Endothelial cell of umbilical vein (primary cell): ENCODE measurements at regions of chr11 and their contacts with region 1.

Region 1: DNA sequence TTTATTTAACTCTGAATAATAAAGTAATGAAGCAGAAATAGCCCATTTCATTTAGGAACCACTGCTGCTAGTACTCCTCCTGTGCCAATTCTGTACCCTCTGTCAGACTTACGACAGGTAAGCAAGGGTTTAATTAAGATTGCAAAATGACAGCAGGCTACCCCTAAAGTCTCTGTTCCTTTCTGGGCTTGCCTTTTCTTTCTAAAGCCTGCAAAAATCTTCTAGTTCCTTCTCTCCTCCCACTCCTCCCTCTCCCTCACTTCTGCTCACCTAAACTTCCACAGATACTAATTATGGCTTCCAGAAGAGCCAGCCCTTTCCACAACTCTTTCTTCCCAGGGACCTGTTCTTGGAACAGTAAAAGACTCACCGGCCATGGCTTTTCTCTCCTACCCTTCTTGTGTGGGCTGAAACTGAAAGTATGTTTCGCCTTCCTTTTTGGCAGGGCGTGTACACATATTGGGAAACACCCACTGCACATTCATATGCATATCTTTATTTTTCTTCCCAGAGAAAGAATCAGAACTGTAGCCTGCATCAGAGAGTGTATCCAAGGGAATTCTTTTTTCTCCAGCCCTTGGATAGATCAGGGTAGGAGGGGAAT is at the start of gene CARD16:
- DNase-seq: peak; percentile 74
- H3K4me3 ChIP-seq: peak within 1 kb of the TSS; percentile 36 to 83 (median 62)
- H3K27ac ChIP-seq: peak within 1 kb of the TSS; percentile 88
- H3K4me1 ChIP-seq: peaks cover 41% of the 10 kb centered on the region
- H3K27me3 ChIP-seq: no peaks in the 10 kb centered on the region
- CTCF ChIP-seq: no peak
- POLR2A ChIP-seq: no peak
- total RNA-seq, gene CARD16: 68.7 and 76.6 TPM in 2 replicates

Region 2: DNA sequence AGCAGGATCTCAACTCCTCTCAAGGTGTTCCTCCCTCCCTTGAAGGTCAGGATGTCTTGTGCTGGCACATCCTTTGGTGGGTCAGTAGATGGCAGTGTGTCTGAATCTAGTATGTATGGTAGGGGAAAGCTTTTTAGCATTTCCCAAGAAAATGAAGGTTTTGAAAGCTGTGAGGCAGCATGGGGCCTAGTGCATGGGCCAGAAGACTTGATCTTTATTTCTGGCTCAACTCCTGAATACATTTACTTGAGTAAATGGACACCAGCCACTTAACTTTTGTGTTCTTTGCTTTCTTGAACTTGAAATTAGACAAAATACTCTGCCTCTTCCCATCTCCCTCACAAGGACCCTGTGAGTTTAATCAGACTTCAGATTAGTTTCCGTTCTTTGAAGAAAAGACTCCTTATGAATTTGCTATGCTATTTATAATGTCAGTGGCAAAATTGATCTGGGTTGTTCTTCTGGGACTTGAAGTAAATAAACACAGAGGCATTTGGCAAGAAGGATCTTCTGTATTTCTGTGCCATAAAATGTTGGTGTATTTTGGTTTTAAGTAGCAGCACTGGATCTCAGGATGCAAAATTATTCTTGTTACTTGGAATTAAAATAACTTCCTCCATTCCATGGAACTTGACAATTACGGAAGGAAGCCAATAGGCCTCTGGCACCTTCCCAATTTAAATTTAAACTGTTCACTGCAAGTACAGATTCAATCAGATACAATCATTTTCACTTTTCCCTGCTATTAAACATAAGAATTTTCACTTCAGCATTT is 435.5 kb before region 1 on chr11:
- CTCF ChIA-PET with region 1: no interaction called
- POLR2A ChIA-PET with region 1: no interaction called
- dilution Hi-C with region 1: no loop called
- intact Hi-C with region 1: loop called (anchors 1 kb)
- DNase-seq: peak; percentile 80
- H3K4me3 ChIP-seq: no peak overlapping the region
- H3K27ac ChIP-seq: no peak overlapping the region
- H3K4me1 ChIP-seq: peaks cover 8% of the 10 kb centered on the region
- H3K27me3 ChIP-seq: no peaks in the 10 kb centered on the region
- CTCF ChIP-seq: peak; percentile 69 to 74
- POLR2A ChIP-seq: no peak

Region 3: DNA sequence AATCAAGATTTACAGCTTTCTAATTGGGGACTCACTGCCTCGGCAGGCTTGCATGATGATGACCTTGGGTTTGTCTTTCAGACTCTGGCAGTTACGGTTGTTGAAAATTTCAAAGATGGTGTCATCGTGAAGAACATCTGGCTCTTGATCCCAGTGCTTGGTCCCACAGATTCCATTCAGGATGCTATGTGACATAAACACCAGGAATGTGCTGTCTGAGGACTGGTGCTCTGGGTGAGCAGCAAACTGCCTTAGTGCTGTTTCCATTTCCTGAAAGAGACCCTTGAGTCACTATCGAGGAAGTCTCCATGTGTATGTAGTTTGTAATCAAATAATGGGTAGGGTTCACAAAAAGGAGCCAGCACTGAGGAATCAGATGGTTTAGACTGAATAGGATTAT is 153.9 kb before region 1 on chr11:
- CTCF ChIA-PET with region 1: no interaction called
- POLR2A ChIA-PET with region 1: no interaction called
- dilution Hi-C with region 1: no loop called
- intact Hi-C with region 1: no loop called
- DNase-seq: peak; percentile 74
- H3K4me3 ChIP-seq: no peak overlapping the region
- H3K27ac ChIP-seq: peak overlapping the region; percentile 39
- H3K4me1 ChIP-seq: peaks cover 40% of the 10 kb centered on the region
- H3K27me3 ChIP-seq: no peaks in the 10 kb centered on the region
- CTCF ChIP-seq: no peak
- POLR2A ChIP-seq: no peak

Region 4: GRCh38 chr11:104934594-104934993 is 110.4 kb before region 1 on chr11:
- CTCF ChIA-PET with region 1: no interaction called
- POLR2A ChIA-PET with region 1: no interaction called
- dilution Hi-C with region 1: no loop called
- intact Hi-C with region 1: no loop called
- DNase-seq: no peak
- H3K4me3 ChIP-seq: no peak overlapping the region
- H3K27ac ChIP-seq: no peak overlapping the region
- H3K4me1 ChIP-seq: no peaks in the 10 kb centered on the region
- H3K27me3 ChIP-seq: no peaks in the 10 kb centered on the region
- CTCF ChIP-seq: no peak
- POLR2A ChIP-seq: no peak

Region 5: GRCh38 chr11:104968355-104968855 is 76.6 kb before region 1 on chr11 and contains the start of gene CASP4:
- CTCF ChIA-PET with region 1: interaction called, 3 read pairs
- POLR2A ChIA-PET with region 1: no interaction called
- dilution Hi-C with region 1: no loop called
- intact Hi-C with region 1: loop called (anchors 1 kb)
- DNase-seq: peak; percentile 93
- H3K4me3 ChIP-seq: peak within 1 kb of the TSS; percentile 48 to 93 (median 91)
- H3K27ac ChIP-seq: peak within 1 kb of the TSS; percentile 92
- H3K4me1 ChIP-seq: peaks cover 20% of the 10 kb centered on the region
- H3K27me3 ChIP-seq: no peaks in the 10 kb centered on the region
- CTCF ChIP-seq: no peak
- POLR2A ChIP-seq: peak; percentile 56
- total RNA-seq, gene CASP4: 77.4 and 83.1 TPM in 2 replicates

Region 6: GRCh38 chr11:105109855-105110687 is 65.0 kb after region 1 on chr11:
- CTCF ChIA-PET with region 1: no interaction called
- POLR2A ChIA-PET with region 1: no interaction called
- dilution Hi-C with region 1: no loop called
- intact Hi-C with region 1: loop called (anchors 1 kb)
- DNase-seq: peak; percentile 72
- H3K4me3 ChIP-seq: peak overlapping the region in 1 of 3 experiments; percentile 33
- H3K27ac ChIP-seq: peak overlapping the region; percentile 81
- H3K4me1 ChIP-seq: peaks cover 17% of the 10 kb centered on the region
- H3K27me3 ChIP-seq: no peaks in the 10 kb centered on the region
- CTCF ChIP-seq: no peak
- POLR2A ChIP-seq: peak; percentile 9

Region 7: GRCh38 chr11:105244160-105244820 is 199.3 kb after region 1 on chr11:
- CTCF ChIA-PET with region 1: no interaction called
- POLR2A ChIA-PET with region 1: no interaction called
- dilution Hi-C with region 1: no loop called
- intact Hi-C with region 1: loop called (anchors 1 kb)
- DNase-seq: peak; percentile 94
- H3K4me3 ChIP-seq: no peak overlapping the region
- H3K27ac ChIP-seq: peak overlapping the region; percentile 96
- H3K4me1 ChIP-seq: peaks cover 16% of the 10 kb centered on the region
- H3K27me3 ChIP-seq: no peaks in the 10 kb centered on the region
- CTCF ChIP-seq: no peak
- POLR2A ChIP-seq: no peak

Region 8: DNA sequence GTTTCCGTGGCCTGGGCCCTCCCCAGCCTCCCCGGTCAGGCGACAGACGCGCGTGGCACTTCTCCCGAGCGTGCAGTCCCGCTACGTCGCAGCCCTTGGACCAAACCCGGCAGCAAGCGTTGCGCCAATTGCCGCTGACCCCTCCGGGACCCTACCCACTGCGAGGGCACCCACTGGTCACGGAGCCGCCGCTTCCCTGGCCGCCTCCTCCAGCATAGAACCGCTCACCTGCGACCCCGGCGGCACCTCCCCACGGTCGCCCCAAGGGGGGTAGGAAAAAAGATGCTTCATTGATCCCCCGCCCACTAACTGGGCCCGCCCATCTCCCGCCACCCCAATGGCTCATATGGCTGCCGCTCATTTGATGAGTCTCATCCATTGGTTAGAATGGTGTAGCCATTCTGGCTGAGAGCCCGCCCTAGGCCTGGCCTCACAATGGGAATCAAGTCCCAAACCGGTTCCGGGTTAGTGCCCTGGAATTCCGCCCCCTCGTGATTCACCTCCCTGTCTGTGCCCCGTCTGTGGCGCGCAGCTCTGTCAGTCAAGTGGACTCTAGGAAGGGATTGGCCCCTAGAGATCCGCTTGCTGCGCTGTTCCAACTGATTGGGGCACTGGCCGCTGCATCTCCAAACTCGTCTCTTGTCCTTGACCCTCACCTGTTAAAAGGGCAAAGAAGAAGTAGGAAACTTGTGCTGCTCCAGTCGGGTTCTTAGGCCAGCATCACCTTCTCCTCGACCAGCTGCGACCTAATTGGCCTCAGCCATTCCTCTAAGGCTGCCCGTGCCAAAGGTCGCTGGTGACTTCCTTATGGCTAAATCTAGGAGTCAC is 977.2 kb after region 1 on chr11 and contains the start of gene MSANTD4:
- CTCF ChIA-PET with region 1: no interaction called
- POLR2A ChIA-PET with region 1: no interaction called
- dilution Hi-C with region 1: no loop called
- intact Hi-C with region 1: loop called (anchors 10 kb)
- DNase-seq: peak; percentile 99
- H3K4me3 ChIP-seq: peak within 1 kb of the TSS; percentile 59 to 97 (median 87)
- H3K27ac ChIP-seq: peak within 1 kb of the TSS; percentile 63
- H3K4me1 ChIP-seq: peaks cover 17% of the 10 kb centered on the region
- H3K27me3 ChIP-seq: no peaks in the 10 kb centered on the region
- CTCF ChIP-seq: no peak
- POLR2A ChIP-seq: peak; percentile 78
- total RNA-seq, gene MSANTD4: 13.8 and 15.0 TPM in 2 replicates